ENCODE measurements at regions of chr1 and their contacts with region 1.

Region 1: GRCh38 chr1:224329842-224330753 is at the start of gene NVL:
- DNase-seq: peak; percentile 90
- H3K4me3 ChIP-seq: peak within 1 kb of the TSS; percentile 69 to 87 (median 85)
- H3K27ac ChIP-seq: peak within 1 kb of the TSS; percentile 91
- H3K4me1 ChIP-seq: peaks cover 19% of the 10 kb centered on the region
- H3K27me3 ChIP-seq: no peaks in the 10 kb centered on the region
- CTCF ChIP-seq: no peak
- POLR2A ChIP-seq: peak; percentile 85
- total RNA-seq, gene NVL: 30.3 and 35.6 TPM in 2 replicates

Region 2: DNA sequence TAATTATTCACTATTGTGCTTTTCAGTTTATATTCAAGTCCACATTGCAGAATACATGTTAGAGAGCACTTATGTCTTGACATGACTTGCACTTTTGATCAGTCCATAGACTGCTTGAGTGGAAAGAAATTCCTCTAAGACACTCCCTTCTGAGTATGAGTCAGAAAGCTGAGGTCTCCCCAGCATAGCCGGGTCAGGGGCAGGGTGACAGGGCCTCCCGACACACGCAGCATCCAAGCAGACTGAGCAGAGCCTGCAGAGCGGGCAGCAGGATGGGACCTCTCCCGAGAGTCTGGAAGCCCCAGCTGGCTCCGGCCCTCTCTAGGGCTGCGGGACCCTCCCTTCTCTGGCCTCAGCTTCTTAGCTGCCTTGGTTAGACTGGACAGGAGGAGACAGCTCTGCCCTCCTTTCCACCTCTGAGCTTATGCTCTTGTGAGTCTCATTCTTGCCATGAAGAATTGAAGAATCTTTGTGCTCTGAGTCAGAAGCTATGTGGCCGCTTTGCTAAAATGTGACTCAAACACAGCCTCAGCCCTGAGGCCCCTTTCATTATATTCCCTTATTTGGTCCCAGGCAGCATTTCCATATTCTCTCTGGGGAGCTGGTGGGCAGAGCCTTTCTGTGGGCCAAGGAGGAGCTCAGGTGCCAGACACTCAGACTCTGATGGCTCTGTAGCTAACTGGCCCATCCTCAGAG is 629.0 kb before region 1 on chr1:
- CTCF ChIA-PET with region 1: interaction called, 4 read pairs
- POLR2A ChIA-PET with region 1: no interaction called
- dilution Hi-C with region 1: no loop called
- intact Hi-C with region 1: loop called (anchors 1 kb)
- DNase-seq: peak; percentile 74
- H3K4me3 ChIP-seq: no peak overlapping the region
- H3K27ac ChIP-seq: peak overlapping the region; percentile 73
- H3K4me1 ChIP-seq: peaks cover 37% of the 10 kb centered on the region
- H3K27me3 ChIP-seq: no peaks in the 10 kb centered on the region
- CTCF ChIP-seq: no peak
- POLR2A ChIP-seq: peak; percentile 26

Region 3: DNA sequence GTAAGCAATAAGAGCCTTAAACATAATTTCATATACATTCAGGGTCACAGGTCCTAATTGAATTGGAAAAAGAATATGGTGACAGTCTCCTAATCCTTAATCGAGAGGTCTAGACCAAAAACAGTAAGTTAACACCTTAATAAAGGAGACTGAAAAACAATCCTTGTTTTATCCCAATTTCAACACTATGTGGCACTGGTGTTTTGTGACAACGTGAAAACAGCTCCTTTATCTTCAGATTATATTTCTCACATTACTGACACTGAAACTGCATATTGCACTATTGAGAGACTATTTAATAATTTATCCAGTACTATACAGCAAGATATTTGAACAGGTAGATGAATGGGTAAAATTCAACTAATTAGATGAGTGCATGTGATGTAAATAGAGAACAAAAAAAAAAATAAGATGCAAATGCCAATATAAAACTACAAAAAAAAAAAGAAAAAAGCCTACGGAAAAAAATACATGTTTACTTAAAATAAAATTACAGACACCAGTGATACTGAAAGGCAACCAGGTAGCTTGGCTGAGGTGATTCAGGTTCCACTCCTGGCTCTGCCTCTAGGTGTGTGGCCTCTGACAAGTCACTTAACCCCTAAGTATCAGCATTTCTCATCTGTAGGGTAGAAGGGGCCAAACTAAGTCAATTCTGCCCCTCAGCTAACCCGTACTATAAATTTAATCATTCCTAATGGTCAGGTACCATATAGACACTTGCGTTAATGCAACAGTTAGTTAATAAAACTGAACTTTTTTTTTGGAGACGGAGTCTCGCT is 518.3 kb before region 1 on chr1:
- CTCF ChIA-PET with region 1: no interaction called
- POLR2A ChIA-PET with region 1: no interaction called
- dilution Hi-C with region 1: no loop called
- intact Hi-C with region 1: loop called (anchors 2 kb)
- DNase-seq: peak; percentile 68
- H3K4me3 ChIP-seq: no peak overlapping the region
- H3K27ac ChIP-seq: no peak overlapping the region
- H3K4me1 ChIP-seq: peaks cover 15% of the 10 kb centered on the region
- H3K27me3 ChIP-seq: no peaks in the 10 kb centered on the region
- CTCF ChIP-seq: peak; percentile 18 to 22
- POLR2A ChIP-seq: no peak

Region 4: DNA sequence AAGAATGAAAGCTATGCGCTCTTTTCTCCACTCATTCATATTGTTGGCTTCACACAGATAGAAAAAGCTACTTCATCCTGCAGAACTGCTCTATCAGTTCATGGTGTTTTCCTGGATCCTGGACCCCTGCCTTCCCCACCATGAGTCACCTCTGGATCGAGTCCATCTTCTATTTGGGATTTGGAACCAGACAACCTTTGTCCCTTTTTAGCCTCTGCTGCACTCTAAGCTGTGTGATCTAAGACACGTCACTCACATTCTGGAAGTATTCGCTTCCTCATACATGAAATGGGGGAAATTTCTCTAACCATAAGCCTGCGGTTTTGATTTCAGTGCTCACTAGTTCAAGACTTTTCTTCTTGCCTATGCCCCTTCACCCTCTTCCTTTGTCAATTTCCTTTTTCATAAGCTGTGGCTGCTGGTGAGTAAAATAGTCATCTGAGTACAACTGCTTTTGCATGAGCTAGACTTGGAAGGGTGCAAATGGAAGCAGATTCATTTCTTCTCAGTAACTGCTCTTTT is 161.2 kb before region 1 on chr1:
- CTCF ChIA-PET with region 1: interaction called, 12 read pairs
- POLR2A ChIA-PET with region 1: interaction called, 5 read pairs
- dilution Hi-C with region 1: no loop called
- intact Hi-C with region 1: loop called (anchors 1 kb)
- DNase-seq: peak; percentile 94
- H3K4me3 ChIP-seq: peak overlapping the region in 1 of 3 experiments; percentile 27
- H3K27ac ChIP-seq: peak overlapping the region; percentile 45
- H3K4me1 ChIP-seq: peaks cover 15% of the 10 kb centered on the region
- H3K27me3 ChIP-seq: peaks cover 0 to 3% of the 10 kb centered on the region in 2 experiments
- CTCF ChIP-seq: no peak
- POLR2A ChIP-seq: no peak

Region 5: GRCh38 chr1:224226849-224227502 is 103.1 kb before region 1 on chr1:
- CTCF ChIA-PET with region 1: no interaction called
- POLR2A ChIA-PET with region 1: no interaction called
- dilution Hi-C with region 1: no loop called
- intact Hi-C with region 1: no loop called
- DNase-seq: no peak
- H3K4me3 ChIP-seq: no peak overlapping the region
- H3K27ac ChIP-seq: no peak overlapping the region
- H3K4me1 ChIP-seq: peaks cover 16% of the 10 kb centered on the region
- H3K27me3 ChIP-seq: no peaks in the 10 kb centered on the region
- CTCF ChIP-seq: no peak
- POLR2A ChIP-seq: no peak

Region 6: DNA sequence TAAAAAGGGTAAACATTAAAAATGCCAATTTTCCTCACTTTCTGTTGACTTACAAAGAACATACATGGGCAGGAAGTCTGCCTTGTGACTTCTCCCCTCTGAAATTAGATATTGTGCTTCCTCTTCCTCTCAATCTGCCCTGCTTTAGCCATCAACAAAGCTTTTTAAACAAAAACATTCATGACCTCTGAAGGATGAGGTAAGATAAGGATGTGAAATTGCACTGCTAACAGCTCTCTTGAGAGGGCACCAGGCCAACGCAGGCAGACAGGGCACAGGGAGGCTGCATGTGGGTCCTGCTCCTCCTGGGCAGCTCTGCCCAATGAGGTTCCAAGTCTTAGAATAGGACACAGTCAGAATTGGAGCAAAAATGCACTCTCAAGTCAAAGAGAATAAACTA is 84.9 kb before region 1 on chr1:
- CTCF ChIA-PET with region 1: no interaction called
- POLR2A ChIA-PET with region 1: no interaction called
- dilution Hi-C with region 1: no loop called
- intact Hi-C with region 1: loop called (anchors 1 kb)
- DNase-seq: peak; percentile 99
- H3K4me3 ChIP-seq: no peak overlapping the region
- H3K27ac ChIP-seq: peak overlapping the region; percentile 57
- H3K4me1 ChIP-seq: peaks cover 15% of the 10 kb centered on the region
- H3K27me3 ChIP-seq: no peaks in the 10 kb centered on the region
- CTCF ChIP-seq: no peak
- POLR2A ChIP-seq: peak; percentile 81

Region 7: GRCh38 chr1:224387302-224387912 is 57.3 kb after region 1 on chr1:
- CTCF ChIA-PET with region 1: no interaction called
- POLR2A ChIA-PET with region 1: no interaction called
- dilution Hi-C with region 1: no loop called
- intact Hi-C with region 1: no loop called
- DNase-seq: no peak
- H3K4me3 ChIP-seq: no peak overlapping the region
- H3K27ac ChIP-seq: no peak overlapping the region
- H3K4me1 ChIP-seq: no peaks in the 10 kb centered on the region
- H3K27me3 ChIP-seq: no peaks in the 10 kb centered on the region
- CTCF ChIP-seq: no peak
- POLR2A ChIP-seq: no peak